Activated CD4-positive, alpha-beta T cell treated with anti-CD3 and anti-CD28 coated beads for 36 hours (primary cell): ENCODE measurements at regions of chr14 and their contacts with region 1.

Region 1: DNA sequence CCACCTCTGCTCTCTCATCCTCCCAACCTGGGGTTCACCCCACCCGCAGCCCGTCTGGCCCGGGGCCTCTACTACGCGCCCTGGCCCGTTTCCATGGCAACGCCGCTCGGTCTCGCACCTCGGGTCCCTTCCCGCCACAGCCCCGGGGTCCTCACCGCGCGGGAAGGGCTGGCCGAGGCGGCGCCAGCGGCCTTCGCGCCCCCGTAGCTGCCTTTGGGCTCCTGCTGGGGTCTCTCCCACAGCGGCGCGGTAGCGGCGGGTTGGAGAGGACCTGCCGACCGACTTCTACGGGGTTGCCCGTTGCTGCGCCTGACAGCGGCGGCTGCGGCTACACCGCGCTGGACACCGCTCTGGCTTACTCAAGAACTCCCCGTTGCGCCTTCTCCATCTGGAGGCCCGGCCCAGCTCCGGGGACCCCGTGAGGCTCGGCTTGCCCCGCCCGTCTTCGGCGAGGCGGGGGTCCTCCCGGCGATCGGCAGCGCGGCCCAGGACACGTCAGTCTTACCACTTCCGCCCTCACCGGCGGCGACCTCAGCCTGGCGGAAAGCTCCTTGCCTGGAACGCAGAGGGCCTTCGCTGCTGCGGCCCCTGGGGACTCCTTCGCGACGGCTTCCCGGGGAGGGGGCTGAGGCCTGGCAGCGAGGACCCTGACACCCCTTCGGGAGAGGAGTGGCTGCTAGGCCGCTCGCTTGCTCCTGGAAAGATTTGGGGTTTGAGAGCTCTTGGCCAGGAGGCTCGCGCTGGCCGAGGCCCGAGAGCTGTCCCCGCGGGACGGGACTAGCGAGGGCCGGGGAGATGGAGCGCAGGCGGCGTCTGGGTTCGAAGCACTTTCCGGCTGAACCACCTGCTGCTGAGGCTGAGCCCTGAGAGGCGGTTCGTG is at the start of gene TM9SF1:
- DNase-seq: peak; percentile 93
- ATAC-seq: peak; percentile 93
- H3K4me3 Mint-ChIP-seq: peak within 1 kb of the TSS; percentile 90
- H3K27ac Mint-ChIP-seq: peak within 1 kb of the TSS; percentile 93
- H3K4me1 Mint-ChIP-seq: peaks cover 50% of the 10 kb centered on the region
- H3K27me3 Mint-ChIP-seq: no peaks in the 10 kb centered on the region
- total RNA-seq, gene TM9SF1: 17.0 to 24.4 TPM

Region 2: DNA sequence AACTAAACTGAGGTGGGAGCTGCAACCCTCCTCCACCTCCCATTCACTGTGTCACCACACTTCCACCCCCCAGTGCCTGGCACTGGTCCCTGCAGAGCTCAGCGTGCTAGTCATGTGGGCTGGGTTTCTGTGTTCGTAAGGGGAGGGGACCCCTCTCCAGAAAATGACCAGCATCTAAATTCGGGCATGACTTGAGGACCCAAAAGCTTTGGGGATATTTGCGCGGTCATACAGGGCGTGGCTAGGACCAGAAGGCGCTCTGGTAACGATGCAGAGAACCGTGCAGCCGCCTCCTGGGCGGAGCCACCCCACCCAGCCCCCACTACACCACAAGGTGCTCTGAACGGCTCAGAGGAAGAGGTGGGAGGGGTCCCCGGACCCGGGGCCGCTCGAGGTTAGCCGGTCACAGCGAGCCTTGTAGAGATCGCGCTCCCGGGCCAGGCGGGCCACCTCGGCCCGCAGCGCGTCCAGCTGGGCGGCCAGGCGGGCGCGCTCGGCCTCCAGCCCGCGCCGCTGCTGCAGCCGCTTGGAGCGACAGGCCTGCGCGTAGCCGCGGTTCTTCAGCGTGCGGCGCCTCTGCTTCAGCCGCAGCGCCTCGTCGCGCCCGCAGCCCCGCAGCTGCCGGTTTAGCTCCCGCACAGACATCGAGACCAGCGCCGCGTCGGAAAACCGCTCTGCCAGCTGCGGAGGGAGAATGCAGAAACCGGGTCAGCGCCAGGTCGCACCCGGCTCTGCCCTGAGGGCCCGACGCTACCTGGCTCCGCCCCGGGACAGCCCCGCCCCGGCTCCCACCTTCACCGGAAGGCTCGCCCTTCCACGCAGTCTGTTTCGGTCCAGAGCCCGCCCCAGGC is 114.3 kb before region 1 on chr14:
- CTCF ChIA-PET with region 1: no interaction called
- POLR2A ChIA-PET with region 1: no interaction called
- intact Hi-C with region 1: no loop called
- DNase-seq: peak; percentile 84
- ATAC-seq: peak; percentile 92
- H3K4me3 Mint-ChIP-seq: peak overlapping the region; percentile 68
- H3K27ac Mint-ChIP-seq: peak overlapping the region; percentile 45
- H3K4me1 Mint-ChIP-seq: peaks cover 20% of the 10 kb centered on the region
- H3K27me3 Mint-ChIP-seq: no peaks in the 10 kb centered on the region

Region 3: GRCh38 chr14:24141097-24141880 is 54.1 kb before region 1 on chr14 and contains the start of gene EMC9:
- CTCF ChIA-PET with region 1: no interaction called
- POLR2A ChIA-PET with region 1: interaction called, 11 read pairs
- intact Hi-C with region 1: loop called in 1 of 2 experiments (anchors 1 kb)
- DNase-seq: peak; percentile 100
- ATAC-seq: peak; percentile 87
- H3K4me3 Mint-ChIP-seq: peak within 1 kb of the TSS; percentile 88
- H3K27ac Mint-ChIP-seq: peak within 1 kb of the TSS; percentile 97
- H3K4me1 Mint-ChIP-seq: peaks cover 66% of the 10 kb centered on the region
- H3K27me3 Mint-ChIP-seq: no peaks in the 10 kb centered on the region
- total RNA-seq, gene EMC9: 36.9 to 46.7 TPM

Region 4: DNA sequence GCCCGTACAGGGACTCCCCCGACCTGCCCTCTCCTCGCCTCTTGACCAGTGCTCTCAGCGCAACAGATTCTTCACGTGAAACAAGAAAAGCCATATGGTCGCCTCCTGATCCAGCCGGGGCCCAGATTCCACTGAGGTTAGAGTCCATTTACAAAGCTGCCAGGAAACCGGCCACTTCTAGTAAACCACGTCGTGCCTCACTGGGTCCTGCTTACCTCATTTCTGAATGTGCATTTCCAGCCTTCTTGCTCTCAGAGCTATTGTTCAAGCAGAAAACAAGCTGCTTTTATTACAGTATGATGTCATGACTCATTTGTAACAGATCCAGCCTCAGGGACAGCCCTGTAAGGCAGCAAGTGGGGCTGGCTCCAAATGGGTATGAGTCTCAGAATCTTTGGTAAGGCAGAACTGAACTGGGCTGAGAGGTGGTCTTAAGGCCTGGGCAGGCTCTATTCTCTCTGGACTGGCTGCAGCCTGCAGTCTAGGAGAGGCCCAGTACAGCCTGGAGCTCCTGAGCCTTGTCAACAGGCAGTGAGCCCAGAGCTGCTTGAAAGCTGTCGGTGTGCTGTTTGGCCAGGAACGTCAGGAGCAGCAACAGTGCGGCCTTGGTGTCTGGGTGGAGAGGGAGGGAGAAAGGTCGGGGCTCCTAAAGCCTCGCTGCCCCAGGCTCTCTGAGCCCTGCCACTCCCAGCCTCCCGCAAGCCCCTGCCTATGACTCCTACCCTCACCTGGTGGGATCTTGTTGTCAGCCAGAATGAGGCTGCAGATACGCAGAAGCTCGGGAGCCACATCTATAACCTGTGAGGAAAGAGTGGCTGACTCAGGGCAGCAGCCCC is 15.3 kb before region 1 on chr14:
- CTCF ChIA-PET with region 1: no interaction called
- POLR2A ChIA-PET with region 1: no interaction called
- intact Hi-C with region 1: no loop called
- DNase-seq: no peak
- ATAC-seq: peak; percentile 37
- H3K4me3 Mint-ChIP-seq: no peak overlapping the region
- H3K27ac Mint-ChIP-seq: no peak overlapping the region
- H3K4me1 Mint-ChIP-seq: no peaks in the 10 kb centered on the region
- H3K27me3 Mint-ChIP-seq: no peaks in the 10 kb centered on the region

Region 5: GRCh38 chr14:24232121-24232644 is 36.8 kb after region 1 on chr14 and contains the start of gene NEDD8:
- CTCF ChIA-PET with region 1: no interaction called
- POLR2A ChIA-PET with region 1: no interaction called
- intact Hi-C with region 1: loop called (anchors 1 kb)
- DNase-seq: peak; percentile 96
- ATAC-seq: peak; percentile 91
- H3K4me3 Mint-ChIP-seq: peak within 1 kb of the TSS; percentile 78
- H3K27ac Mint-ChIP-seq: peak within 1 kb of the TSS; percentile 89
- H3K4me1 Mint-ChIP-seq: peaks cover 58% of the 10 kb centered on the region
- H3K27me3 Mint-ChIP-seq: no peaks in the 10 kb centered on the region
- total RNA-seq, gene NEDD8: 187 to 217 TPM

Region 6: DNA sequence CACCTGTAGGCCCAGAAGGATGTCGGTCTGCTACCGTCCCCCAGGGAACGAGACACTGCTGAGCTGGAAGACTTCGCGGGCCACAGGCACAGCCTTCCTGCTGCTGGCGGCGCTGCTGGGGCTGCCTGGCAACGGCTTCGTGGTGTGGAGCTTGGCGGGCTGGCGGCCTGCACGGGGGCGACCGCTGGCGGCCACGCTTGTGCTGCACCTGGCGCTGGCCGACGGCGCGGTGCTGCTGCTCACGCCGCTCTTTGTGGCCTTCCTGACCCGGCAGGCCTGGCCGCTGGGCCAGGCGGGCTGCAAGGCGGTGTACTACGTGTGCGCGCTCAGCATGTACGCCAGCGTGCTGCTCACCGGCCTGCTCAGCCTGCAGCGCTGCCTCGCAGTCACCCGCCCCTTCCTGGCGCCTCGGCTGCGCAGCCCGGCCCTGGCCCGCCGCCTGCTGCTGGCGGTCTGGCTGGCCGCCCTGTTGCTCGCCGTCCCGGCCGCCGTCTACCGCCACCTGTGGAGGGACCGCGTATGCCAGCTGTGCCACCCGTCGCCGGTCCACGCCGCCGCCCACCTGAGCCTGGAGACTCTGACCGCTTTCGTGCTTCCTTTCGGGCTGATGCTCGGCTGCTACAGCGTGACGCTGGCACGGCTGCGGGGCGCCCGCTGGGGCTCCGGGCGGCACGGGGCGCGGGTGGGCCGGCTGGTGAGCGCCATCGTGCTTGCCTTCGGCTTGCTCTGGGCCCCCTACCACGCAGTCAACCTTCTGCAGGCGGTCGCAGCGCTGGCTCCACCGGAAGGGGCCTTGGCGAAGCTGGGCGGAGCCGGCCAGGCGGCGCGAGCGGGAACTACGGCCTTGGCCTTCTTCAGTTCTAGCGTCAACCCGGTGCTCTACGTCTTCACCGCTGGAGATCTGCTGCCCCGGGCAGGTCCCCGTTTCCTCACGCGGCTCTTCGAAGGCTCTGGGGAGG is 115.5 kb after region 1 on chr14 and contains the start of gene LTB4R:
- CTCF ChIA-PET with region 1: interaction called, 13 read pairs
- POLR2A ChIA-PET with region 1: no interaction called
- intact Hi-C with region 1: no loop called
- DNase-seq: peak; percentile 81
- ATAC-seq: peak; percentile 83
- H3K4me3 Mint-ChIP-seq: peak within 1 kb of the TSS; percentile 70
- H3K27ac Mint-ChIP-seq: peak within 1 kb of the TSS; percentile 77
- H3K4me1 Mint-ChIP-seq: peaks cover 61% of the 10 kb centered on the region
- H3K27me3 Mint-ChIP-seq: no peaks in the 10 kb centered on the region
- total RNA-seq, gene LTB4R: 10.1 to 14.2 TPM

Region 7: GRCh38 chr14:24442273-24443052 is 247.0 kb after region 1 on chr14 and contains the start of gene SDR39U1:
- CTCF ChIA-PET with region 1: interaction called, 4 read pairs
- POLR2A ChIA-PET with region 1: no interaction called
- intact Hi-C with region 1: loop called in 1 of 2 experiments (anchors 1 kb)
- DNase-seq: peak; percentile 98
- ATAC-seq: peak; percentile 92
- H3K4me3 Mint-ChIP-seq: peak within 1 kb of the TSS; percentile 97
- H3K27ac Mint-ChIP-seq: peak within 1 kb of the TSS; percentile 99
- H3K4me1 Mint-ChIP-seq: peaks cover 41% of the 10 kb centered on the region
- H3K27me3 Mint-ChIP-seq: no peaks in the 10 kb centered on the region
- total RNA-seq, gene SDR39U1: 40.9 to 47.8 TPM